Calu3 (cell line): ENCODE measurements at regions of chr6 and their contacts with region 1.

Region 1: GRCh38 chr6:87154993-87155841 is at the start of gene ZNF292:
- DNase-seq: peak; percentile 98
- H3K4me3 Mint-ChIP-seq: peak within 1 kb of the TSS; percentile 90
- H3K27ac Mint-ChIP-seq: peak within 1 kb of the TSS; percentile 91
- H3K4me1 Mint-ChIP-seq: peaks cover 19% of the 10 kb centered on the region
- H3K27me3 Mint-ChIP-seq: no peaks in the 10 kb centered on the region
- CTCF ChIP-seq: no peak
- total RNA-seq, gene ZNF292: 41.6 and 44.6 TPM in 2 replicates

Region 2: GRCh38 chr6:87197547-87197946 is 42.3 kb after region 1 on chr6:
- CTCF ChIA-PET with region 1: no interaction called
- intact Hi-C with region 1: no loop called
- DNase-seq: no peak
- H3K4me3 Mint-ChIP-seq: no peak overlapping the region
- H3K27ac Mint-ChIP-seq: no peak overlapping the region
- H3K4me1 Mint-ChIP-seq: no peaks in the 10 kb centered on the region
- H3K27me3 Mint-ChIP-seq: no peaks in the 10 kb centered on the region
- CTCF ChIP-seq: no peak

Region 3: GRCh38 chr6:87213364-87213763 is 58.1 kb after region 1 on chr6:
- CTCF ChIA-PET with region 1: no interaction called
- intact Hi-C with region 1: loop called (anchors 2 kb)
- DNase-seq: peak; percentile 77
- H3K4me3 Mint-ChIP-seq: peak overlapping the region; percentile 64
- H3K27ac Mint-ChIP-seq: peak overlapping the region; percentile 96
- H3K4me1 Mint-ChIP-seq: peaks cover 32% of the 10 kb centered on the region
- H3K27me3 Mint-ChIP-seq: no peaks in the 10 kb centered on the region
- CTCF ChIP-seq: no peak